Activated T-helper 1 cell treated with anti-CD3 and anti-CD28 coated beads, Interleukin-12 subunit alpha, Interleukin-12 subunit beta, Interleukin-2, Interleukin-4 antibody, amounts not matched to agents 30 ng/mL and 10 ng/mL and 1 ng/mL, durations not matched to agents 14 hours and 24 hours and 36 hours (primary cell): ENCODE measurements at regions of chr9 and their contacts with region 1.

Region 1: GRCh38 chr9:8188720-8189407 is 389.3 kb upstream of the DMAC1 start:
- DNase-seq: no peak
- H3K4me3 Mint-ChIP-seq: no peak overlapping the region
- H3K27ac Mint-ChIP-seq: no peak overlapping the region
- H3K4me1 Mint-ChIP-seq: no peaks in the 10 kb centered on the region
- H3K27me3 Mint-ChIP-seq: no peaks in the 10 kb centered on the region

Region 2: GRCh38 chr9:7560669-7561305 is 628.1 kb before region 1 on chr9:
- intact Hi-C with region 1: loop called (anchors 10 kb)
- DNase-seq: no peak
- H3K4me3 Mint-ChIP-seq: no peak overlapping the region
- H3K27ac Mint-ChIP-seq: no peak overlapping the region
- H3K4me1 Mint-ChIP-seq: no peaks in the 10 kb centered on the region
- H3K27me3 Mint-ChIP-seq: peaks cover 15% of the 10 kb centered on the region

Region 3: DNA sequence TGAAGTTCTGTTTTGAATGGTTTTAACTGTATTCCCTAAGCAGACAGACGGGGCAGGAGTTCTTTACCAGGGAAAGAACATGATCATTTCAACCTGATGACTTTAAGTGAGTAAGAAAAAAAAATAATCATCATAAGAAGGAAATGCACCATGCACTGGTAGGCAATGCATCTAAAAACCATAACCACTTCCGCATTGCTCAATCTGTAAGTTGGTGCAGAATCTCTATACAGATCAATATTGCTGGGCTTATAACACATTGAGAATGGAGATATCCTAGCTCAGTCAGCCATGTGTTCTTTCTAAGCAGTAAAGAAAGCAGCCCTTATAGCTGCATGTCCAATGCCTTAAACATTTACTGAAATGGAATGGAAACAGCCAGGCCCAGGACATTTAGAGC is 17.9 kb after region 1 on chr9:
- intact Hi-C with region 1: no loop called
- DNase-seq: no peak
- H3K4me3 Mint-ChIP-seq: no peak overlapping the region
- H3K27ac Mint-ChIP-seq: no peak overlapping the region
- H3K4me1 Mint-ChIP-seq: no peaks in the 10 kb centered on the region
- H3K27me3 Mint-ChIP-seq: peaks cover 4% of the 10 kb centered on the region